Posterior vena cava (tissue), 2 donors: ENCODE measurements at regions of chr19 and their contacts with region 1.

Region 1: GRCh38 chr19:1151917-1152617 is 22.0 kb downstream of the SBNO2 start:
- DNase-seq: peak; percentile 90

Region 2: DNA sequence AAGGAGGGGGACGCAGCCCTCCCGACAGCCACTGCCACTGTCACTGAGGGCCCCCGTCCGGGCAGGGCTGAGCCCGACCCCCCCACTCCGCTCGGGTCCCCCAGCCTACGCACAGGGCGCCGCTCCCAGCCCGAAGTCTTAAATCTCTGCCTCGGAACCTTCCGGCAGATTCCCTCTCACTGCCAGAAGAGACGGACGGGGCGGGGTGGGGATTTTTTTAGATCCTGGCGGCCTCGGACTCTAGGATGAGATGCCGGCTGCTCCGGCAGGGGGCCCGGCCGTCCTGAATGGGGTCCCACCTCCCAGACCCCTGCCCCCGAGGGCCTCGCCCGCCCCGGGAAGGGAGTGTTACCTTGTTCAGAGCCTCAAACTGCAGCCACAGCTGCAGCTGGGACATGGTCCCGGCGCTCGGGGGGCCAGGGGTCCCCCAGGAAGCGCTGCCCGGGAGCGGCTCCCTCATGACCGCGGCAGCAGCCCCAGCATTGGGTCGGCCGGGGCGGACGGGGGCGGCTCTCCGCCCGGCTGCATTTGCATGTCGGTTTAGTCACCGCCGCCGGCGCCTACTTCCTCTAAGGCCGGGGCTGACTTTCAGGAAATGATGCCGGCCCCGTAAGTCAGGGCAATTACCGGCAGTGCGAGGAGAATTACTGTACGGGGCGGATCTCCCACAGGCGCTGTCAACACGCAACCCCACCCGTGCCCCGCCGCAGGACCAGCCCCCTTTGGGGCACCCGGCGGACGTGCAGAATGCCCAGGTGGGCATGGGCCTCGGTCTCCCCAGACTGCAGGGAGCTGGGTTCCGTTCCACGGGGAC is 20.1 kb before region 1 on chr19:
- intact Hi-C with region 1: loop called in 1 of 2 experiments (anchors 2 kb)
- DNase-seq: peak; percentile 99

Region 3: GRCh38 chr19:1285737-1286360 is 133.8 kb after region 1 on chr19 and contains the start of gene EFNA2:
- intact Hi-C with region 1: no loop called
- DNase-seq: no peak
- total RNA-seq, gene EFNA2: not detected